GM12878 (cell line): ENCODE measurements at regions of chr12 and their contacts with region 1.

Region 1: DNA sequence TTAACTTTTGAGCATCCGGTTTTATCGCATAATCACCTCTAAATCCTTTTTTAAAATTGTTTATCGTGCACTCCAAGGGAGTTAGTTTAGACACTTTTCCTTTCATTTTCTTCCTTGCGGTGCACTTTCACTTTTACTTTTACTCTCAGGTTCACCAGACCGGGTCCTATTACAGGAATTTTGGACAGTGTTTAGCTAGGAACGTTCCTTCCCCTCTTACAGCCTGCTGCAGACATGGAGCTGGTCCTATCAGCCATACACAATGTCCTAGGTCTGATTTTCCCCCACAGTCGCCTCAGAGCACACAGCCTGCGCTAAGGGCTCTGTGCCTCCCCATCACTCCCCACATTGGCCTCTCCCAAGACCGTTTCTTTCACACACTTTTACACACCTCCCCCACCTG is 103.9 kb downstream of the ALG10 start:
- DNase-seq: no peak
- ATAC-seq: peak; percentile 69
- H3K4me3 ChIP-seq: no peak overlapping the region; the same call in 1 of the 2 replicates
- H3K27ac ChIP-seq: no peak overlapping the region
- H3K4me1 ChIP-seq: no peaks in the 10 kb centered on the region
- H3K27me3 ChIP-seq: no peaks in the 10 kb centered on the region
- CTCF ChIP-seq: no peak
- EP300 ChIP-seq: no peak
- POLR2A ChIP-seq: no peak
- RAD21 ChIP-seq: no peak

Region 2: DNA sequence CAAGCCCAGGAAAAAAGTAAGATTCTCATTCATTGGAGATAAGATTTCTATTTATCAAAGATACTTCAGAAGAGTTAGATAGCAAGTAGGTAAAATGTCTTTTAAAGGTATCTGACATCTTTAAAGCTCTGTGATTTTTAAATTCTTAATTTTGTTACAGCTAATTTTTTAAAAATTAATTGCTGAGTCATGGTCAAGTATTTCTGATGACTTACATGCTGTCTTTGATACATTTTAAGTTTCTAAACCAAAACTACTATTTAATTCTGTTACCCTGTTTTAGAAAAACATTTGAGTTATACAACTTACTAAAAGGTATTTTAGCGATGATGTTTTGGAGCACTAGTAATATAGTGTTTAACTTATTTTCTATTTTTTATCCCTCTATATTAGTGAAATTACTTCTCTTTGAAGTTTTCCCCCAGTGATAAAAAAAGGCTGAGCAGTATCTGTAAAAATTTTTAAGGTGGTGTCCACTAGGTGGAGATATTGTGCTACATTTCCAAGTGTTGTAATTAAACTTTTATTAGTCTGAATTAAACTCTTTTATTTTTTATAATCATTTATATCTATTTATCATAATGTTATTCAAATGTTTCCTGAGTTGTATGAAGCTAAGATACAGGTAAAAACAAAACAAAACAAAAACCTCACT is 92.5 kb before region 1 on chr12:
- CTCF ChIA-PET with region 1: interaction called, 3 read pairs
- POLR2A ChIA-PET with region 1: no interaction called
- RAD21 ChIA-PET with region 1: no interaction called
- SMC1A ChIA-PET with region 1: no interaction called
- in situ Hi-C with region 1: no loop called
- intact Hi-C with region 1: loop called (anchors 5 kb)
- DNase-seq: no peak
- ATAC-seq: peak; percentile 45; the same call in 2 of the 3 replicates
- H3K4me3 ChIP-seq: no peak overlapping the region
- H3K27ac ChIP-seq: no peak overlapping the region
- H3K4me1 ChIP-seq: no peaks in the 10 kb centered on the region
- H3K27me3 ChIP-seq: no peaks in the 10 kb centered on the region
- CTCF ChIP-seq: peak in 2 of 3 experiments; percentile 32 to 34; a peak in 4 of 6 replicates
- EP300 ChIP-seq: no peak
- POLR2A ChIP-seq: no peak
- RAD21 ChIP-seq: peak; percentile 36; the same call in 1 of the 2 replicates